ENCODE measurements at regions of chr6 and their contacts with region 1.

Region 1: DNA sequence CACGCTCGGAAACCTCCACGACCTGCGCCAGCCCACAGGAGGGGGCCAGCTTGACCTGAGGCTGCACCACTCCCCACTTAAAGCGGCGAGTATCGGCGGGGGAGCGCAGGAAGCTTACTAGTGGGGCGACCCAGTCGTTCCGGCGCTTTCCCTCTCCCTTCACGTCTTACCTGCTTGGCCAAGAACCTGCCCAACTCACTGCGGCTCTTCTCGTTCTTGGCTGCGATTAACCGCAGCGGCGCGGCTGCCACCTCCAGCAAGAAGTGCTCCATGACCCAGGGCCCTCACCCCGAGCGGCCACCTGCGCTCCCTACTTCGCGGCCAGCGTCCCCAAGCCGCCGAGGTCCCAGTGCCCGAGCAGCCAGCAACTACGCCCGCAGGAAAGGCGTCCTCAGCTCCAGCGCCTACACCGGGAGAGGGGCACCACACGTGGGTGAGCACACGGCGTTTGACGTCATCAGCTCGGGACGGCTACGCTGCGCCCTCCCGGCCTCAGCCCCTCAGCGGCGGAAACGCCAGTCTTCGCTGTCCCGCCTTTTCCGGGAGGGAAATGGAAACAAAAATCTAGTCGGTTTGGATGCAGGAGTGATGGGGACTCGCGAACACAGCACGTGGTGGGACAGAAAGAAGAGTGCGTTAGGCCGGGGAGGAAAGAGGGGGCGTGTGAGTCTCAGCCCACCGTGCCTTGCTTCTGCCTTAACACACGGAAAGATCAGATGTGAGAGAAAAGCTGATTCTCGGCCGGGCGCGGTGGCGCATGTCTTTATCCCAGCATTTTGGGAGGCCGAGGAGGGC is at the start of gene MDN1:
- DNase-seq: peak; percentile 98
- H3K4me3 ChIP-seq: peak within 1 kb of the TSS; percentile 77
- H3K27ac ChIP-seq: peak within 1 kb of the TSS; percentile 85
- H3K4me1 ChIP-seq: no peaks in the 10 kb centered on the region
- H3K27me3 ChIP-seq: no peaks in the 10 kb centered on the region
- CTCF ChIP-seq: no peak
- total RNA-seq, gene MDN1: 61.2 and 64.4 TPM in 2 replicates

Region 2: GRCh38 chr6:89716532-89716931 is 103.0 kb before region 1 on chr6:
- CTCF ChIA-PET with region 1: no interaction called
- POLR2A ChIA-PET with region 1: interaction called, 16 read pairs
- intact Hi-C with region 1: no loop called
- DNase-seq: no peak
- H3K4me3 ChIP-seq: no peak overlapping the region
- H3K27ac ChIP-seq: no peak overlapping the region
- H3K4me1 ChIP-seq: no peaks in the 10 kb centered on the region
- H3K27me3 ChIP-seq: no peaks in the 10 kb centered on the region
- CTCF ChIP-seq: no peak

Region 3: GRCh38 chr6:89895276-89895874 is 75.8 kb after region 1 on chr6:
- CTCF ChIA-PET with region 1: no interaction called
- POLR2A ChIA-PET with region 1: no interaction called
- intact Hi-C with region 1: no loop called
- DNase-seq: peak; percentile 38
- H3K4me3 ChIP-seq: no peak overlapping the region
- H3K27ac ChIP-seq: no peak overlapping the region
- H3K4me1 ChIP-seq: no peaks in the 10 kb centered on the region
- H3K27me3 ChIP-seq: peaks cover under 1% of the 10 kb centered on the region
- CTCF ChIP-seq: no peak

Region 4: DNA sequence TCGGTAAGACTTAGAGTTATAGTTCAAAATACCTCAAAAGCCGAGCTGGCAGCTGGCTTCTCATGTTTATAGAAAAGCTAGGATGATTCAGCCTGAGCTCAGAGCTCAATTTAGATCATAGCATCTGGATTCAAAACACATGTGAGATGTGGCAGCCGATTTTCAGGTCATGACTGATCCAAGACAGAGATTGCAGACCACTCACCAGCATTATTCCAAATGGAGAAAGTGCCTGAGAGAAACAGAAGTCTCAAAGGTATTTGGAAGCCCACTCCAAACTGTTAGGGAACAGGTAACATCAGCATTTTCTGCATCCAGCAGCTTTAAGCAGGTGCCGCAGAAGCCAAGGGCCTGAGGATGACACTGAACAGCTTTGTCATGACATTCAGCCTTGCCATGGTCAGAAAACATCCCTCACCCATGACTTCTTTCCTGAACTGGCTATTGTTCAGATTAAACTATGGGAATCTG is 374.9 kb after region 1 on chr6:
- CTCF ChIA-PET with region 1: no interaction called
- POLR2A ChIA-PET with region 1: no interaction called
- intact Hi-C with region 1: no loop called
- DNase-seq: no peak
- H3K4me3 ChIP-seq: no peak overlapping the region
- H3K27ac ChIP-seq: no peak overlapping the region
- H3K4me1 ChIP-seq: no peaks in the 10 kb centered on the region
- H3K27me3 ChIP-seq: no peaks in the 10 kb centered on the region
- CTCF ChIP-seq: no peak